Common myeloid progenitor, CD34-positive (primary cell): ENCODE measurements at regions of chr1 and their contacts with region 1.

Region 1: DNA sequence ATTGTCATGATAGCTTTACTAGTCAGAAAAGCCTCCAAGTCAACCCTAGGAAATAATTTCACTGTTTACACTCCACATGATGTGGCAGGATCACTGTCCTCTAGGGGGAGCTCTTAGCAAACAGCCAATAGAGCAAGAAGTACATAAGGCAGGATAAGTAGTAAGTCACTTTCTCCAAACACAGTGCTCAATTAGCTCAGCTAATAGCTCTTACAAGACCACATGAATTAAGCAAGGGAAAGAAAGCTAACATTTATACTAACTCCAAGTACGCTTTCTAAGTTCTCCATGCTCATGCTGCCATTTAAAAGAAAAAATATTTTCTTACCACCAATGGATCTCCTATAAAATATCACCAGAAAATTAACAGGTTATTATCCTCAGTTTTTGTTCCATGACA is 66.9 kb upstream of the LRIF1 start:
- DNase-seq: peak; percentile 51 to 75 (median 69)
- H3K4me3 ChIP-seq: no peak overlapping the region
- H3K27ac ChIP-seq: no peak overlapping the region
- H3K4me1 ChIP-seq: no peaks in the 10 kb centered on the region
- H3K27me3 ChIP-seq: peaks cover 0 to 4% (median 0%) of the 10 kb centered on the region in 5 experiments

Region 2: GRCh38 chr1:110976089-110976488 is 54.5 kb before region 1 on chr1:
- CTCF ChIA-PET with region 1: no interaction called
- POLR2A ChIA-PET with region 1: no interaction called
- DNase-seq: no peak
- H3K4me3 ChIP-seq: no peak overlapping the region
- H3K27ac ChIP-seq: no peak overlapping the region
- H3K4me1 ChIP-seq: no peaks in the 10 kb centered on the region
- H3K27me3 ChIP-seq: peaks cover 0 to 3% (median 2%) of the 10 kb centered on the region in 5 experiments

Region 3: DNA sequence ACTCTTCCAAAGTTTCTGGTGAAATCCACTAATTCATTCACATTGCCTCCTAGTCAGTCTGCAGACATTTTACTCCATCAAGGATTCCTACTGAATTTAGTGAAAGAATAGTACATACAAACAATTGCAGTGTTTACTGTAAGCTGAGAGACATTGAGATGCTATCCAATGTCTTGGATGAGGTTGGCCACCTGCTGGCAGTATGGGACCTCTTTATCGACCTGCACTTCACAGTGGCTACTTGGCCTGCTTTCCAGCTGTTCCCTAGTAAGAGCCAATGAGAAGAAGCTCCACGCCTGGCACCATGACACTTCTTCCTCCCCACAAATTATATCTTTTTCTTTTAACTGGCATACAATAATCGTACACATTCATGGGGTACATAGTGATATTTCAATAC is 15.4 kb before region 1 on chr1:
- CTCF ChIA-PET with region 1: interaction called, 10 read pairs
- POLR2A ChIA-PET with region 1: no interaction called
- DNase-seq: no peak
- H3K4me3 ChIP-seq: no peak overlapping the region
- H3K27ac ChIP-seq: no peak overlapping the region
- H3K4me1 ChIP-seq: no peaks in the 10 kb centered on the region
- H3K27me3 ChIP-seq: peaks cover 0 to 3% (median 0%) of the 10 kb centered on the region in 5 experiments